WTC11 (cell line): ENCODE measurements at regions of chr7 and their contacts with region 1.

Region 1: DNA sequence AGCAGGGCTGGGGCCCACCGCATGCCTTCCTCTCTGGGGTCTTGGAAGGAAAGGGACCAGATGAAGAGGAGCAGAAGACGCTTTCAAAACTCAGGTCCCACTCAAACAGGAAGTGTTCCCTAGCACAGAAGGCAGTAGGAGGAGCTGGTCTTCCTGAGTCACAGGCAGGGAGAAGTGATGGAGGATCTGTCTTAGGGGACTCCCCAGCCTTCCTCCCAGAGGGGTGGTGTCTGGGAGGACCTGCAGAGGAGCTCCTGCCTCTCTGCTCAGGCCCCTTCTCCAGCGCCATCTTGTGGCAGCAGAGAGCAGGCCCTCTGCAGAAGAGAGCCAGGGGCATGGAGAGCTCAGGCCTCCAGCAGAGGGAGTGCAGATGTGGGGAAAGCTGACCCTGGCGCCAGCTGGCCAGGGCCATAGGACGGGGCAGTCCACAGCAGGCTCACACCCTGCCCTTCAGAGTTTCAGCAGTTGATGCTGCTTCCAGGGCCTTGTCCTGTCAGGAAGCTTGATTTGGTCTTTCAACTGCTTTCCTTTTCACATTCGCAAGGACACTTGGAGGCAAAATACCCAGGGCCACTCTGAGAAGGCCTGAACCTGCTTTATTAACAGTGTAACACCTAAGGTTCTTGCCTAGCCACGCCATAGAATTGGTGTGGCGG is 62.2 kb upstream of the TARP start:
- DNase-seq: peak; percentile 94
- ATAC-seq: peak; percentile 78
- H3K4me3 Mint-ChIP-seq: no peak overlapping the region
- H3K27ac Mint-ChIP-seq: no peak overlapping the region
- H3K4me1 Mint-ChIP-seq: peaks cover 34% of the 10 kb centered on the region
- H3K27me3 Mint-ChIP-seq: no peaks in the 10 kb centered on the region
- CTCF ChIP-seq: peak; percentile 70

Region 2: GRCh38 chr7:37916673-37917660 is 418.7 kb before region 1 on chr7 and contains the start of gene SFRP4:
- CTCF ChIA-PET with region 1: interaction called, 16 read pairs
- POLR2A ChIA-PET with region 1: interaction called, 3 read pairs
- DNase-seq: peak; percentile 64
- ATAC-seq: peak; percentile 42
- H3K4me3 Mint-ChIP-seq: peak within 1 kb of the TSS; percentile 78
- H3K27ac Mint-ChIP-seq: no peak within 1 kb of the TSS
- H3K4me1 Mint-ChIP-seq: peaks cover 16% of the 10 kb centered on the region
- H3K27me3 Mint-ChIP-seq: peaks cover 84% of the 10 kb centered on the region
- CTCF ChIP-seq: no peak
- total RNA-seq, gene SFRP4: 0.07 to 0.24 TPM (median 0.09 TPM) in 3 replicates

Region 3: DNA sequence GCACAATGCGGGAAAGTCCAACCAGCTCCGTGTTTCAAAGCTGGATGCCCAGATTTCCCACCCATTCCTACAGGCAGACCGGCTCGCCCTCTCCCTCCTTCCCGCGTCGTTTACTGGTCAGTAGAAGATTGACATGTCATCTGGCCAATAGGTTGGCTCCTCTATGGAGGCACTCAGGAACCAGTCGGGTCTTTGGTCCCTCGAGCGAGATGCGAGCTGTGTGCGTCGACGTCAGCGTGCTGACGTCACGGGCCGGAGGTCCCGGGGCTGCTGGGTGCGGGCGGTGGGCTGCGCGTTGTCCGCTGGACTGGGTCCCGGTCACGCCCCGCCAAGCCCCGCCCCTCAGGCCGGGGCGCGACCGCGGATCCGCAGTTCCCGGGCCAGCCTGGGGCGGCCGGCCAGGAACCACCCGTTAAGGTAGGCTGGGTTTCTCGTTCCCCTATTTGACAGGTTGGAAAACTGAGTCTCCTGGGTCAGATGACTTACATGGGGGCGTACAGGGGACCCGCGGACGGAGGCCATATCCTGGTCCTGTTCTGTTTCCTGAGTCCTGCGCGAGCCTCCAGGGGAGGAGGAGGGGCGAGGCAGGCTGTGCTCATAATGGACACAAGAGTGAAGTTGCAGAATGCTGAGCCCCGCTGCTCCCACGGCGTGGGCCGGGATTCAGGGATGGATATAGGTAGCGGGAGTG is 157.5 kb before region 1 on chr7 and contains the start of gene STARD3NL:
- CTCF ChIA-PET with region 1: interaction called, 13 read pairs
- POLR2A ChIA-PET with region 1: no interaction called
- DNase-seq: peak; percentile 94
- ATAC-seq: peak; percentile 99
- H3K4me3 Mint-ChIP-seq: peak within 1 kb of the TSS; percentile 91
- H3K27ac Mint-ChIP-seq: peak within 1 kb of the TSS; percentile 98
- H3K4me1 Mint-ChIP-seq: peaks cover 18% of the 10 kb centered on the region
- H3K27me3 Mint-ChIP-seq: peaks cover 13% of the 10 kb centered on the region
- CTCF ChIP-seq: no peak
- total RNA-seq, gene STARD3NL: 30.6 to 33.1 TPM (median 32.2 TPM) in 3 replicates

Region 4: GRCh38 chr7:38215735-38216670 is 119.6 kb before region 1 on chr7:
- CTCF ChIA-PET with region 1: interaction called, 105 read pairs
- POLR2A ChIA-PET with region 1: interaction called, 4 read pairs
- DNase-seq: peak; percentile 81
- ATAC-seq: peak; percentile 92
- H3K4me3 Mint-ChIP-seq: no peak overlapping the region
- H3K27ac Mint-ChIP-seq: peak overlapping the region; percentile 57
- H3K4me1 Mint-ChIP-seq: peaks cover 41% of the 10 kb centered on the region
- H3K27me3 Mint-ChIP-seq: no peaks in the 10 kb centered on the region; the same call in 1 of the 2 replicates
- CTCF ChIP-seq: peak; percentile 94

Region 5: GRCh38 chr7:38245409-38245977 is 90.1 kb before region 1 on chr7:
- CTCF ChIA-PET with region 1: no interaction called
- POLR2A ChIA-PET with region 1: no interaction called
- DNase-seq: no peak
- ATAC-seq: no peak
- H3K4me3 Mint-ChIP-seq: no peak overlapping the region
- H3K27ac Mint-ChIP-seq: no peak overlapping the region
- H3K4me1 Mint-ChIP-seq: no peaks in the 10 kb centered on the region
- H3K27me3 Mint-ChIP-seq: no peaks in the 10 kb centered on the region
- CTCF ChIP-seq: no peak

Region 6: GRCh38 chr7:38311329-38311937 is 24.2 kb before region 1 on chr7:
- CTCF ChIA-PET with region 1: interaction called, 80 read pairs
- POLR2A ChIA-PET with region 1: no interaction called
- DNase-seq: peak; percentile 36
- ATAC-seq: peak; percentile 50; the same call in 1 of the 2 replicates
- H3K4me3 Mint-ChIP-seq: peak overlapping the region; percentile 60
- H3K27ac Mint-ChIP-seq: no peak overlapping the region
- H3K4me1 Mint-ChIP-seq: peaks cover 5% of the 10 kb centered on the region; the same call in 1 of the 2 replicates
- H3K27me3 Mint-ChIP-seq: no peaks in the 10 kb centered on the region
- CTCF ChIP-seq: no peak

Region 7: GRCh38 chr7:38492010-38492409 is 156.4 kb after region 1 on chr7:
- CTCF ChIA-PET with region 1: no interaction called
- POLR2A ChIA-PET with region 1: no interaction called
- DNase-seq: no peak
- ATAC-seq: peak; percentile 98
- H3K4me3 Mint-ChIP-seq: no peak overlapping the region
- H3K27ac Mint-ChIP-seq: no peak overlapping the region
- H3K4me1 Mint-ChIP-seq: 0 out of 2 replicates have a peak, but pooled peaks cover 4% of the 10 kb centered on the region
- H3K27me3 Mint-ChIP-seq: no peaks in the 10 kb centered on the region
- CTCF ChIP-seq: no peak